Panc1 (cell line): ENCODE measurements at regions of chr1 and their contacts with region 1.

Region 1: DNA sequence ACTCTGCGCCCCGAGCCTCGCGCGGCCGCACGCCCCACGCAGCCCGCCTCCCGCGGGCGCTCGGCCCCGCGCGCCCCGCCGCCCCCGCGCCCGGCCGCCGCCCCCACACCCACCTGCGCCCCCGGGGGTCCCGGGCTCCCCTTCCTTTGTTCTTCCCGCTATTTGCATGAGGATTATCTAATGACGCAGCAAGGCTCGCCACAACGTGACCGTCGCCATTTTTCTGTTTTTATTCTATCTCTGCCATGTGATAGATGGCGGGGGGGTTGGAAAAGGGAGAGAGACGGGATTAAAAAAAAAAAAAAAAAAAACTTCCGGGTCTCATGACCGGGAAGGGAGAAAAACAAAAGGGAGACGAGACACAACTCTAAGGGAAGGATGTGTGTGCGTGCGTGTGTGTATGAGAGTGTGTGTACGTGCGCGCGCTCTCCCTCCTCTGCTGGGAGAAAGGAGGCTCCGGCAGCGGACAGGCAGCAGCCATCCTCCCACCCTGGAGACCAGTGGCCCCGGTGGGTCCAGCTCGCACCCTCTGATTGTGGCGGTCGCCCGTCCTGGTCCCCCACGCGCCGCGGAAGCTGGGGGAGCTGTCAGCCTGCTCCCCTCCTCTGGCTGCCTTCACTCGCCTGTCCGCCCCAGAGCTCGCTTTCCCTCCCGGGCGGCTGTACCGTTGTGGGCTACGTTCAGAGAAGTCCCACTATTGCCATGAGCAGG is 80.4 kb upstream of the AK4 start:
- DNase-seq: no peak
- ATAC-seq: peak; percentile 64
- H3K4me3 ChIP-seq: peak overlapping the region; percentile 49 to 68
- H3K27ac ChIP-seq: no peak overlapping the region
- H3K4me1 ChIP-seq: no peaks in the 10 kb centered on the region; the same call in 1 of the 2 replicates
- H3K27me3 ChIP-seq: peaks cover 12% of the 10 kb centered on the region
- CTCF ChIP-seq: no peak

Region 2: GRCh38 chr1:65090403-65090802 is 22.8 kb after region 1 on chr1:
- CTCF ChIA-PET with region 1: no interaction called
- POLR2A ChIA-PET with region 1: no interaction called
- in situ Hi-C with region 1: no loop called
- intact Hi-C with region 1: loop called (anchors 1 kb)
- DNase-seq: no peak
- ATAC-seq: peak; percentile 53; the same call in 1 of the 2 replicates
- H3K4me3 ChIP-seq: no peak overlapping the region
- H3K27ac ChIP-seq: no peak overlapping the region
- H3K4me1 ChIP-seq: no peaks in the 10 kb centered on the region
- H3K27me3 ChIP-seq: no peaks in the 10 kb centered on the region
- CTCF ChIP-seq: no peak

Region 3: GRCh38 chr1:66831529-66832239 is 1764.0 kb after region 1 on chr1:
- CTCF ChIA-PET with region 1: no interaction called
- POLR2A ChIA-PET with region 1: no interaction called
- in situ Hi-C with region 1: no loop called
- intact Hi-C with region 1: no loop called
- DNase-seq: no peak
- ATAC-seq: no peak
- H3K4me3 ChIP-seq: no peak overlapping the region
- H3K27ac ChIP-seq: no peak overlapping the region
- H3K4me1 ChIP-seq: no peaks in the 10 kb centered on the region
- H3K27me3 ChIP-seq: no peaks in the 10 kb centered on the region
- CTCF ChIP-seq: no peak